ENCODE measurements at regions of chr6 and their contacts with region 1.

Region 1: GRCh38 chr6:154814063-154814462 is 80.8 kb downstream of the SCAF8 start:
- DNase-seq: no peak
- ATAC-seq: peak; percentile 39
- H3K4me3 Mint-ChIP-seq: peak overlapping the region; percentile 13
- H3K27ac Mint-ChIP-seq: peak overlapping the region; percentile 64
- H3K4me1 Mint-ChIP-seq: peaks cover 45% of the 10 kb centered on the region
- H3K27me3 Mint-ChIP-seq: no peaks in the 10 kb centered on the region
- CTCF ChIP-seq: no peak

Region 2: GRCh38 chr6:153957394-153957793 is 856.7 kb before region 1 on chr6:
- CTCF ChIA-PET with region 1: no interaction called
- POLR2A ChIA-PET with region 1: no interaction called
- intact Hi-C with region 1: no loop called
- DNase-seq: no peak
- ATAC-seq: no peak
- H3K4me3 Mint-ChIP-seq: no peak overlapping the region
- H3K27ac Mint-ChIP-seq: no peak overlapping the region
- H3K4me1 Mint-ChIP-seq: peaks cover 2% of the 10 kb centered on the region
- H3K27me3 Mint-ChIP-seq: no peaks in the 10 kb centered on the region
- CTCF ChIP-seq: no peak

Region 3: GRCh38 chr6:154441995-154442310 is 372.1 kb before region 1 on chr6:
- CTCF ChIA-PET with region 1: no interaction called
- POLR2A ChIA-PET with region 1: no interaction called
- intact Hi-C with region 1: no loop called
- DNase-seq: no peak
- ATAC-seq: no peak
- H3K4me3 Mint-ChIP-seq: no peak overlapping the region
- H3K27ac Mint-ChIP-seq: no peak overlapping the region
- H3K4me1 Mint-ChIP-seq: no peaks in the 10 kb centered on the region
- H3K27me3 Mint-ChIP-seq: peaks cover 1% of the 10 kb centered on the region
- CTCF ChIP-seq: no peak

Region 4: DNA sequence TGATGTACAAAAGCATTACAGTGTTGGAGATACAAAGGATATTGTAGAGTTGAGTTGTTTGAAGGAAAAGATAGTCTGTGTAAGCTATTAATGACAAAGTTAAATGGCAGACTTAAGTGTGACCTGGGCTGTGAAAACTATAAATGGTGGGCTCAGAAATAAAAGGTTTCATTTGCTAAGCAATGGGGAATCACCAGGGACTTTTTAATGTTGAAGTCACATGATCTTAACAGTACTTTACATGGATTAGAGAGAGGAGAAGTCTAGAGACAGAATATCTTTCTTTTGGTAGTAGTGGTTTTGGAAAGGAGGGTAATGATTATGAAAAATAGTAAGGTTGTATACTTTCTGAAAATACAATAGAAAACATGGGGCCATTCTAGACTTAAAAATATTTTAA is 13.7 kb before region 1 on chr6:
- CTCF ChIA-PET with region 1: interaction called, 13 read pairs
- POLR2A ChIA-PET with region 1: interaction called, 3 read pairs
- intact Hi-C with region 1: loop called (anchors 2 kb)
- DNase-seq: no peak
- ATAC-seq: peak; percentile 76
- H3K4me3 Mint-ChIP-seq: peak overlapping the region; percentile 12
- H3K27ac Mint-ChIP-seq: peak overlapping the region; percentile 85
- H3K4me1 Mint-ChIP-seq: peaks cover 16% of the 10 kb centered on the region
- H3K27me3 Mint-ChIP-seq: no peaks in the 10 kb centered on the region
- CTCF ChIP-seq: no peak

Region 5: GRCh38 chr6:154829970-154830369 is 15.9 kb after region 1 on chr6:
- CTCF ChIA-PET with region 1: no interaction called
- POLR2A ChIA-PET with region 1: no interaction called
- intact Hi-C with region 1: loop called (anchors 2 kb)
- DNase-seq: no peak
- ATAC-seq: no peak
- H3K4me3 Mint-ChIP-seq: no peak overlapping the region
- H3K27ac Mint-ChIP-seq: no peak overlapping the region
- H3K4me1 Mint-ChIP-seq: peaks cover 2% of the 10 kb centered on the region
- H3K27me3 Mint-ChIP-seq: no peaks in the 10 kb centered on the region
- CTCF ChIP-seq: no peak

Region 6: DNA sequence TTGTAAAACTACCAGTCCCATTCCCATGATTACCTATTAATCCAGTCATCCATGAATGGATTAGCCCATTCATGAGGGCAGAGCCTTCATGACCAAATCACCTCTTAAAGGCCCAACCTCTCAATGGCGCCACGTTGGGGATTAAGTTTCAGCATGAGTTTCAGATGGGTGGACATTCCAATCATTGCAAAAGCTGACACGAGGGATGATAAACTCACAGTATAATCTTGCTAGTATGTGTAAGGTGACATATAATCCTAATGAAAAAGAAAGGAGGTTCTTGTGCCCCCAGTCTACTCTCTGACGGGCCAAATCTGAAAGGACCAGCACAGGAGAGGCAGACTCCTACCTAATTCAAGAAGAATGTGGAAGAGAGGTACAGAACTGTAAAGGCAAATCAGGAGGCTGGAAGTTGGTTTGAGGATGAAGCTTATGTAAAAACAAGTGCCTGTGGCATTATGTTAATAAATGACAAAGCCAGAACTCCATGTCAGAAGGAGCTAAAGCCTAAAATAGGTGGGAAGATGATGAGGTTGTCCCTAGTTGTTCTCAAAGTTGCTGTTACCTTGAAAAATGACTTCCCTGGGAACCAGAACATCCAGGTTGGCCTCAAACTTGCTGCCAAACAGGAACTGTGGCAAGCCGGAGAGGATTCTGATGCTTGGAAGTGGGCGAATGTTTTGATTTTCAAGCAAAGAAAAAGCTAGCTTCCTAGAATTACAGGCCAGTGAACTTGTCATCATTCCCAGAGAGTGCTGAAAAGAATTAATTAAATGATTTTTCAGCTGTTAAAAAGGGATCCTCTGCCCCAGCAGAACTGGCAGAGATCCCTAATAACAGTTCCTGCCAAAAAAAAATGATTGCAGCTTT is 74.6 kb after region 1 on chr6:
- CTCF ChIA-PET with region 1: no interaction called
- POLR2A ChIA-PET with region 1: no interaction called
- intact Hi-C with region 1: no loop called
- DNase-seq: no peak
- ATAC-seq: no peak
- H3K4me3 Mint-ChIP-seq: no peak overlapping the region
- H3K27ac Mint-ChIP-seq: no peak overlapping the region
- H3K4me1 Mint-ChIP-seq: no peaks in the 10 kb centered on the region
- H3K27me3 Mint-ChIP-seq: no peaks in the 10 kb centered on the region
- CTCF ChIP-seq: no peak

Measured in activated B cell treated with CpG ODN at 0.5 μM for 24 hours (primary cell).